Activated CD4-positive, alpha-beta T cell treated with anti-CD3 and anti-CD28 coated beads for 36 hours (primary cell): ENCODE measurements at regions of chr10 and their contacts with region 1.

Region 1: GRCh38 chr10:58268870-58269605 is at the start of gene CISD1:
- DNase-seq: peak; percentile 96
- ATAC-seq: peak; percentile 76
- H3K4me3 Mint-ChIP-seq: peak within 1 kb of the TSS; percentile 99
- H3K27ac Mint-ChIP-seq: peak within 1 kb of the TSS; percentile 92
- H3K4me1 Mint-ChIP-seq: peaks cover 29% of the 10 kb centered on the region
- H3K27me3 Mint-ChIP-seq: no peaks in the 10 kb centered on the region
- total RNA-seq, gene CISD1: 29.9 to 49.2 TPM

Region 2: DNA sequence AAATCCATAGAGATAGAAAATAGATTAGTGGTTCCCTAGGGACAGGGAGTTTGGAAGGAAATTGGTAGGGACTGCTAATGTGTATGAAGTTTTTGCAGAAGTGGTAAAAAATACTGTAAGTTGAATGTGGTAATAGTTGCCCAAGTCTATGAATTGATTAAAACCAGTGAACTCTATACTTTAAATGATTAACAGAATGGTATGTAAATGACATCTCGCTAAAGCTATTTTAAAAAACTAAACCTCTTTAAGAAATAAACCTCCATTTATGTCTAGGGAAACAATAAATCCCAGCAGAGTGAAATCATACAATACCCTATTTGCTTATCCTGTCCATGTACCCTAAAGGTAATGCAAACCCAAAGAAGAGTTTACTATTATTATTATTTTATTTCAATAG is 62.8 kb before region 1 on chr10:
- CTCF ChIA-PET with region 1: no interaction called
- POLR2A ChIA-PET with region 1: no interaction called
- intact Hi-C with region 1: no loop called
- DNase-seq: no peak
- ATAC-seq: no peak
- H3K4me3 Mint-ChIP-seq: no peak overlapping the region
- H3K27ac Mint-ChIP-seq: no peak overlapping the region
- H3K4me1 Mint-ChIP-seq: no peaks in the 10 kb centered on the region
- H3K27me3 Mint-ChIP-seq: no peaks in the 10 kb centered on the region

Region 3: GRCh38 chr10:58217612-58218011 is 51.4 kb before region 1 on chr10:
- CTCF ChIA-PET with region 1: interaction called, 3 read pairs
- POLR2A ChIA-PET with region 1: no interaction called
- intact Hi-C with region 1: loop called in 1 of 2 experiments (anchors 5 kb)
- DNase-seq: no peak
- ATAC-seq: no peak
- H3K4me3 Mint-ChIP-seq: no peak overlapping the region
- H3K27ac Mint-ChIP-seq: no peak overlapping the region
- H3K4me1 Mint-ChIP-seq: peaks cover 10% of the 10 kb centered on the region
- H3K27me3 Mint-ChIP-seq: no peaks in the 10 kb centered on the region

Region 4: GRCh38 chr10:58282615-58283014 is 13.6 kb after region 1 on chr10:
- CTCF ChIA-PET with region 1: interaction called, 5 read pairs
- POLR2A ChIA-PET with region 1: no interaction called
- intact Hi-C with region 1: loop called (anchors 1 kb)
- DNase-seq: peak; percentile 50
- ATAC-seq: peak; percentile 87
- H3K4me3 Mint-ChIP-seq: peak overlapping the region; percentile 6
- H3K27ac Mint-ChIP-seq: peak overlapping the region; percentile 78
- H3K4me1 Mint-ChIP-seq: peaks cover 40% of the 10 kb centered on the region
- H3K27me3 Mint-ChIP-seq: no peaks in the 10 kb centered on the region

Region 5: GRCh38 chr10:58334817-58335305 is 65.8 kb after region 1 on chr10 and contains the start of gene UBE2D1:
- CTCF ChIA-PET with region 1: no interaction called
- POLR2A ChIA-PET with region 1: no interaction called
- intact Hi-C with region 1: loop called (anchors 1 kb)
- DNase-seq: peak; percentile 92
- ATAC-seq: peak; percentile 97
- H3K4me3 Mint-ChIP-seq: peak within 1 kb of the TSS; percentile 87
- H3K27ac Mint-ChIP-seq: peak within 1 kb of the TSS; percentile 87
- H3K4me1 Mint-ChIP-seq: peaks cover 36% of the 10 kb centered on the region
- H3K27me3 Mint-ChIP-seq: peaks cover 7% of the 10 kb centered on the region
- total RNA-seq, gene UBE2D1: 12.7 to 15.3 TPM

Region 6: DNA sequence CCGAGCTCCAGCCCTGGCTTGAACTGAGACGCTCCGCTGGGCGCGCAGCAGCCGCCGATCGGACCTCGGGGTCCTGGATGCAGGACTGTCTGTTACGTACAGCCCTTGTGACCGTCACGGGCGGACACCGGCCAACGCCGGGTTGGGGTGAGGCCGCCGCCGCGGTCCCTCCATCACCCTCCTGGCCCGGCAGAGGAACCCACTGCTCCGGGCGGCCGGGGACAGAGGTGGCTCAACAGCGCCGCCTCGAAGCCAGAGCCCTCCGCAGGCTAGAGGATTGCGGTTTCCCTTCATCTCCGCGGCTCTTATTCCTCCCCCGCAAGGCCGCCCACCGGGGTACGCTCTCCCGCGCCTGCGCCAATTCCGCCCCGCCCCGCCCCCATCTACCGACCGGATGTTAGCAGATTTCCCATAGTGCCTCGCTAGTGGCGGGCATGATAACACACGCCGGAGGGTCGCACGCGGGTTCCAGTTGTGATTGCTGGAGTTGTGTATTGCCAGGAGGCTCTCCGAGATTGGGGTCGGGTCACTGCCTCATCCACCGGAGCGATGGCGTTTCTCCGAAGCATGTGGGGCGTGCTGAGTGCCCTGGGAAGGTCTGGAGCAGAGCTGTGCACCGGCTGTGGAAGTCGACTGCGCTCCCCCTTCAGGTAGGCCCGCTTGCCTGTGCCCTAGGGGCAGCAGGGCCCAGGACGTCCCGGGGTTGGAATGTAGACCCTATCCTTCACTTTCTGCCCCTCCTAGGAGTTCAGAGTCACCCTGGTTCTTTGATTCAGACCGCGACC is 116.2 kb after region 1 on chr10 and contains the start of gene TFAM:
- CTCF ChIA-PET with region 1: interaction called, 5 read pairs
- POLR2A ChIA-PET with region 1: interaction called, 3 read pairs
- intact Hi-C with region 1: loop called (anchors 1 kb)
- DNase-seq: peak; percentile 98
- ATAC-seq: peak; percentile 91
- H3K4me3 Mint-ChIP-seq: peak within 1 kb of the TSS; percentile 100
- H3K27ac Mint-ChIP-seq: peak within 1 kb of the TSS; percentile 97
- H3K4me1 Mint-ChIP-seq: peaks cover 44% of the 10 kb centered on the region
- H3K27me3 Mint-ChIP-seq: no peaks in the 10 kb centered on the region
- total RNA-seq, gene TFAM: 108 to 112 TPM